ENCODE measurements at regions of chr3 and their contacts with region 1.

Region 1: DNA sequence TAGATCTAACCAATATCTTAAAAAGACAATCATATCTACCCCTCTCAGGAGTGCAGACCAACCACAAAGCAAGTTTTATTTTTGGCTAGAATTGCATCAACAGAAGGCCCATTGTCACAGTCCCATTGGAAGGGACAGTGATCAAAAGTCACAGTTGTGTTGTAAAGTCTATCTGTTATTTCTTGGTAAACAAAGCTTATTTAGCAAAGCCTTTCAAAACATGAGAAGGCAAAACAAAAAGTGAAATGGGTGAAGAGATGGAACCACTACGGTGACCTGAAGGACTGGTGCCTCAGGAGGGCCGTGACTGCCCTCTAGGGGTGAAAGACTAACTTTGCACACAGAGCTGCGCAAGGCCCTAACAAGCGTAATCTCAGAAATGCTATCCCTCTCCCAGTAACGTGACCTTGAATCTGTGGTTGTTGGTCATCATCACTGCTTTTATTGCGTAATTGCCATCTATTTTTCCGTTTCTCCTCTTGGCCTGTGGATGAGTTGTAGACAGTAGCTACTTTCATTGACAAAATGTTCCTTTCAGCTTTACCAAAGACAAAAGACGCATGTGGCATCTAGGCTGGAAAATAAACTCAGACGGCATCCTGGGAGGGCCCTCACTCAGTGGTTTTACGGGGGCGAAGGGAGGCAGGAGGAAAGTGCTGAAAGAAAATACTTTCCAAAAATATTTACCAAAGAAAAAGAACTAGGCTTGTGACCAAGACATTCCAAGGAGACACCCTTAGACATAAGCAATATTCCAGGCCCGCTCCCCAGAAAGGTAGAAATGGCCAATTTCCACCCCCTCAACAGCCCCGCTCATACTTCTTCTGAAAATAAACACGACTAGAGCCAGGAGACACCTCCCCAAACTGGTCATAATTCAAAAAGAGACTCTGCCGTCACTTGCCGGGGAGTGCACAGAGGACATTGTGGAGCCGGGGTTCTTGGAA is 79.4 kb downstream of the FRMD4B start:
- DNase-seq: peak; percentile 20
- ATAC-seq: peak; percentile 91
- H3K4me3 Mint-ChIP-seq: no peak overlapping the region
- H3K27ac Mint-ChIP-seq: no peak overlapping the region
- H3K4me1 Mint-ChIP-seq: peaks cover 7% of the 10 kb centered on the region
- H3K27me3 Mint-ChIP-seq: no peaks in the 10 kb centered on the region
- CTCF ChIP-seq: no peak

Region 2: GRCh38 chr3:68893600-68894239 is 412.8 kb before region 1 on chr3:
- CTCF ChIA-PET with region 1: interaction called, 4 read pairs
- POLR2A ChIA-PET with region 1: no interaction called
- intact Hi-C with region 1: loop called (anchors 1 kb)
- DNase-seq: no peak
- ATAC-seq: no peak
- H3K4me3 Mint-ChIP-seq: no peak overlapping the region
- H3K27ac Mint-ChIP-seq: no peak overlapping the region
- H3K4me1 Mint-ChIP-seq: no peaks in the 10 kb centered on the region
- H3K27me3 Mint-ChIP-seq: peaks cover 5% of the 10 kb centered on the region
- CTCF ChIP-seq: no peak

Region 3: DNA sequence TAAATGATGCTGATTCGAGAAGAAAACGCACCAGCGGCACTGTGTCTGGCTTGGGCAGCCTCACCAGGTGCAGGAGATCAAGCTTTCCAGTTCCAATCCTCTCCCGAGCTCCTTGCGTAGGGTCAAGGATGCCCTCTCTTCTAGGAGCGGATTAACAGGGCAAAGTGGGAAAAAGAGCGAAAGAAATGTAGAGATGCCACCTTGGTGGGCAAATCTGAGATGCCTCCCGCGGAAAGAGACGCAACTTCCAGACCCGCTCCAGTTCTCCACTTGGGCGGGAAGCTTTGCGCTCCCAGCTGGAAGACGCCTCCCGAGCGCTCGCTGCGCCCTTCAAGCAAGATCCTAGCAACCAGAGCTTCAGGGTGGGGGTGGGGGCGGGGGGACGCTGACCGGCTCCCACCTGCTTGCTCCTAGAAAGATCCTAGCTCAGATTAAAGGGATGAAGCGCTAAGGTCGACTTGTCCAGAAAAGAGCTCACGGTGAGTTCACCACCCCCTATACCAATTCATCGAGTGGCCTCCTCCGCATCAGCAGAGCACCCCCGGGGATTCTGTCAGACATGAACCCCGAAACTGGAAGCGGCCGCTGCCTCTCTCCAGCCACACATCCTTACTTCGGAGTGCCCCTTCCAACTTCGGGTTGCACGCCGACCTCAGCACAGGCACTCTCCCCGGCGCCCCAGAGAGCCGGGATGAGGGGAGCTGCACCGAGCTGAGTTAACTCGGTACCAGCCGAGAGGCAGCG is 374.9 kb before region 1 on chr3:
- CTCF ChIA-PET with region 1: no interaction called
- POLR2A ChIA-PET with region 1: no interaction called
- intact Hi-C with region 1: no loop called
- DNase-seq: no peak
- ATAC-seq: no peak
- H3K4me3 Mint-ChIP-seq: no peak overlapping the region
- H3K27ac Mint-ChIP-seq: no peak overlapping the region
- H3K4me1 Mint-ChIP-seq: peaks cover 13% of the 10 kb centered on the region
- H3K27me3 Mint-ChIP-seq: peaks cover 48% of the 10 kb centered on the region
- CTCF ChIP-seq: no peak

Region 4: DNA sequence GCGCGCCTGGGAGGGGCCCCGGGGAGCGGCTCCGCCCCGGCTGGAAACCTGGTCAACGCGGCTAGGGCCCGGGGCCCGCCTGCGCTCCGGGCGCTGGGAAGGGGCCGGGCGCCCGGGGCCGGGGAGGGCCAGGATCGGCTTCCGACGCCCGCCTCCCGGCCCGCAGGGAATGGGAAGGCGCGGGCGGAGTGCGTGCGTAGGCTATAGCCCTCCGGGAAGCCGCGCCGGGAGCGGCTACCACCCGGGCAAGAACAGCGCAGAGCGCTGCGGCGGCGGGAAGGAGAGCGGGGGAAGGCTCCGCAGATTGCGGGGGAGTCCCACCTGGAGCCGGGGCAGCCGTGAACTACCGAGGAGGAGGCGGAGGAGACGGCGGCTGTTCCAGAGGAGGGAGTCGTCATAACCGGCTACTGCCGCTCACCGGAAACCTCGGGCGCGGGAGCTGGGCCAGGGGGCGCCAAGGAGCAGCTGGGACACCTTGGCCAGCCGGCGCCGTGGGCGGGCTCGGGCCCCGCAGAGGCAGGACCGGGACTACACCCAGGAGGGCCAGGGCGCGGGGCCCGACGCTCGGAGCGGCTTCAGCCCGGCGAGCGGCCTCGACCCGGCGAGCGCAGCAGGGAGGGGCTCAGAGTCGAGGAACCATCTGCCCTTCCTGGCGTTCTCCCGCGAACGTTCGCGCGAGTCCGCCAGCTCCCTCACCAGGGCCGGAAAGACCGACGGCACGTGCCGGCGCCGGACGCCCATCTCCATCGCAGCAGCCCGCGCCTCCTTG is 293.1 kb before region 1 on chr3 and contains the start of gene EOGT:
- CTCF ChIA-PET with region 1: no interaction called
- POLR2A ChIA-PET with region 1: no interaction called
- intact Hi-C with region 1: loop called (anchors 1 kb)
- DNase-seq: peak; percentile 80
- ATAC-seq: peak; percentile 88
- H3K4me3 Mint-ChIP-seq: peak within 1 kb of the TSS; percentile 85
- H3K27ac Mint-ChIP-seq: peak within 1 kb of the TSS; percentile 61
- H3K4me1 Mint-ChIP-seq: peaks cover 9% of the 10 kb centered on the region
- H3K27me3 Mint-ChIP-seq: no peaks in the 10 kb centered on the region
- CTCF ChIP-seq: no peak
- total RNA-seq, gene EOGT: 14.4 and 17.3 TPM in 2 replicates

Region 5: GRCh38 chr3:69204315-69204957 is 102.1 kb before region 1 on chr3:
- CTCF ChIA-PET with region 1: no interaction called
- POLR2A ChIA-PET with region 1: no interaction called
- intact Hi-C with region 1: no loop called
- DNase-seq: no peak
- ATAC-seq: no peak
- H3K4me3 Mint-ChIP-seq: no peak overlapping the region
- H3K27ac Mint-ChIP-seq: no peak overlapping the region
- H3K4me1 Mint-ChIP-seq: no peaks in the 10 kb centered on the region
- H3K27me3 Mint-ChIP-seq: peaks cover 6% of the 10 kb centered on the region
- CTCF ChIP-seq: no peak

Measured in activated B cell treated with CpG ODN at 0.5 μM for 24 hours (primary cell).